ENCODE measurements at regions of chr3 and their contacts with region 1.

Region 1: DNA sequence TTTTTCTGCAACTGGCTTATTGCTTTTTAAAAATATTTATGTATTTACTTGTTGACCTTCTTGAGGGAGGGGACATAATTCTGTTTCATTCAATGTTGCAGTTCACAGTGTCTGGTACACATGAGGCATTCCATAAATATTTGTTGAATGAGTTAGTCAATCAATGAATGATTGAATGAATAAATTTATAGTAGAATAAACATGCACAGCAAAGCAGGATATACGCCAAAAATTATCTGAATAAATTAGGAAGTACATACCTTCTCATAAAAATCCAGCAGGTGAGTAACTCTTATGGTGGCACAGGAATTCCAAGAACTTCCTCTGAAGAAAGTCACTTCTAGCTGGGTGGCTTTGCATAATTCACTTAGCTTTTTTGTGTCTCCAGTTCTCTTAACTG is 469.4 kb upstream of the ATP11B start:
- DNase-seq: no peak
- ATAC-seq: no peak
- H3K4me3 ChIP-seq: no peak overlapping the region
- H3K27ac ChIP-seq: no peak overlapping the region
- H3K4me1 ChIP-seq: no peaks in the 10 kb centered on the region
- H3K27me3 ChIP-seq: no peaks in the 10 kb centered on the region
- CTCF ChIP-seq: no peak
- POLR2A ChIP-seq: no peak

Region 2: GRCh38 chr3:182226995-182227394 is 96.9 kb before region 1 on chr3:
- intact Hi-C with region 1: no loop called
- DNase-seq: no peak
- ATAC-seq: no peak
- H3K4me3 ChIP-seq: no peak overlapping the region
- H3K27ac ChIP-seq: no peak overlapping the region
- H3K4me1 ChIP-seq: no peaks in the 10 kb centered on the region
- H3K27me3 ChIP-seq: no peaks in the 10 kb centered on the region
- CTCF ChIP-seq: no peak
- POLR2A ChIP-seq: no peak

Region 3: GRCh38 chr3:182309120-182309519 is 14.8 kb before region 1 on chr3:
- intact Hi-C with region 1: loop called in 1 of 10 experiments (anchors 1 kb)
- DNase-seq: no peak
- ATAC-seq: no peak
- H3K4me3 ChIP-seq: no peak overlapping the region
- H3K27ac ChIP-seq: no peak overlapping the region
- H3K4me1 ChIP-seq: no peaks in the 10 kb centered on the region
- H3K27me3 ChIP-seq: no peaks in the 10 kb centered on the region
- CTCF ChIP-seq: no peak
- POLR2A ChIP-seq: no peak